GM13977 (cell line): ENCODE measurements at regions of chr1 and their contacts with region 1.

Region 1: GRCh38 chr1:2412519-2413233 is at the start of gene PEX10:
- DNase-seq: peak; percentile 100
- CTCF ChIP-seq: no peak

Region 2: DNA sequence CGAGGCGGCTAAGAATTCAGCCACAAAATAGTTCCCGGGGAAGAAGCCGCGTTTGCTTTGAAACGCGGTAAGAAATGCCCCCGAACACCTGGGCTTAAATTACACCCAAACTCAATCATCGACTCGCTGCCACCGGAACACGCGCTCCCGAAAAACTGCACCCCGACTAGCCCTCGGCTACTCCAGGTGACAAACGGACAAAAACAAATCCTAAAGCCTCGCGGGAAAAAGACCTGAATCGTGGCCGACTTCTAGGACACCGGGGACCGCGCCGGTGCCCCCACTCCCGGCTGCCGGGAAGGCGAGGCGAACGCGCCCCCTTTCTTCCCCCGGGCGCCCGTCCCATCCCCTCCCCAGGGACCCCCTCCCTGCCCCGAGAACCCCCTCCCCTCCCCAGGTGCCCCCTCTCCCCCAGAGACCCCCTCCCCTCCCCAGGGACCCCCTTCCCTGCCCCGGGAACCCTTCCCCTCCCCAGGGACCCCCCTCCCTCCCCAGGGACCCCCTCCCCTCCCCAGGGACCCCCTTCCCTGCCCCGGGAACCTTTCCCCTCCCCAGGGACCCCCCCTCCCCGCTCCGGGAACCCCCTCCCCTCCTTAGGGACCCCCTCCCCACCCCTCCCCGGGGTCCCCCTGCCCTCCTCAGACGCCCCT is 1297.4 kb before region 1 on chr1:
- in situ Hi-C with region 1: no loop called
- DNase-seq: no peak
- CTCF ChIP-seq: no peak

Region 3: GRCh38 chr1:2545759-2546514 is 133.3 kb after region 1 on chr1:
- in situ Hi-C with region 1: loop called (anchors 10 kb)
- DNase-seq: peak; percentile 98
- CTCF ChIP-seq: no peak

Region 4: DNA sequence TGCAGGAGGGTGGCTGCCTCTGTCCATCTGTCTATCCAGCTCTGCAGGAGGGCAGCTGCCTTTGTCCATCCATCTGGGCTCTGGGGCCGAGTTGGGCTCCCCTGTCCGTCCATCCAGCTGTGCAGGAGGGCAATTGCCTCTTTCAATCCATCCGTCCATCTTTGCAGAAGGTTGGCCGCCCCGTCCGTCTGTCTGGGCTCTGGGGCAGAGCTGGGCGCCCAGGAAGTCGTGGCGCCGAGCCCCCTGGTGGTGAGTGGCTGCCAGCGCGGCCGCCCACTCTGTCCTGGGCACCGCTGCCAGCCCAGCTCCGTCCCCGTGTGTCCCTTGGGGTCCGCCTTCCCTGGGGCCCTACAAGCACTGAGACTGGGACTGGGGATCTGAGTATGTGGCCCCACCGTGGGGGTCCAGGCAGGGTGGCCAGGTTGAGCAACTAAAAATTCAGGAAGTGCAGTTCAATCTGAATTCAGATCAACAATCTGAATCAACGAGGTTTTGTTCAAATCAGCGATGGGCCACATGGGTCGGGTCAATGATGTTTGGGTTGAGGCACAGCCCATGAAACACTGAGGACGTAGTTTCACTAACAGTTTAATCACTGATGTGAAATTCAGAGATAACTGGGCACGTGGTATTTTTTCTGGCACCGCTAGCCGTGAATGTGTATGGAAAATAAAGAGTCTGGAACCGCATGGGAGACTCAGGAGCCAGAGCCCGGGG is 509.5 kb after region 1 on chr1:
- in situ Hi-C with region 1: no loop called
- DNase-seq: no peak
- CTCF ChIP-seq: peak; percentile 26

Region 5: GRCh38 chr1:3423245-3423829 is 1010.7 kb after region 1 on chr1:
- in situ Hi-C with region 1: loop called (anchors 10 kb)
- DNase-seq: no peak
- CTCF ChIP-seq: no peak